GM10248 (cell line): ENCODE measurements at regions of chr2 and their contacts with region 1.

Region 1: GRCh38 chr2:136255648-136256463 is 137.9 kb upstream of the CXCR4 start:
- DNase-seq: no peak
- CTCF ChIP-seq: no peak

Region 2: DNA sequence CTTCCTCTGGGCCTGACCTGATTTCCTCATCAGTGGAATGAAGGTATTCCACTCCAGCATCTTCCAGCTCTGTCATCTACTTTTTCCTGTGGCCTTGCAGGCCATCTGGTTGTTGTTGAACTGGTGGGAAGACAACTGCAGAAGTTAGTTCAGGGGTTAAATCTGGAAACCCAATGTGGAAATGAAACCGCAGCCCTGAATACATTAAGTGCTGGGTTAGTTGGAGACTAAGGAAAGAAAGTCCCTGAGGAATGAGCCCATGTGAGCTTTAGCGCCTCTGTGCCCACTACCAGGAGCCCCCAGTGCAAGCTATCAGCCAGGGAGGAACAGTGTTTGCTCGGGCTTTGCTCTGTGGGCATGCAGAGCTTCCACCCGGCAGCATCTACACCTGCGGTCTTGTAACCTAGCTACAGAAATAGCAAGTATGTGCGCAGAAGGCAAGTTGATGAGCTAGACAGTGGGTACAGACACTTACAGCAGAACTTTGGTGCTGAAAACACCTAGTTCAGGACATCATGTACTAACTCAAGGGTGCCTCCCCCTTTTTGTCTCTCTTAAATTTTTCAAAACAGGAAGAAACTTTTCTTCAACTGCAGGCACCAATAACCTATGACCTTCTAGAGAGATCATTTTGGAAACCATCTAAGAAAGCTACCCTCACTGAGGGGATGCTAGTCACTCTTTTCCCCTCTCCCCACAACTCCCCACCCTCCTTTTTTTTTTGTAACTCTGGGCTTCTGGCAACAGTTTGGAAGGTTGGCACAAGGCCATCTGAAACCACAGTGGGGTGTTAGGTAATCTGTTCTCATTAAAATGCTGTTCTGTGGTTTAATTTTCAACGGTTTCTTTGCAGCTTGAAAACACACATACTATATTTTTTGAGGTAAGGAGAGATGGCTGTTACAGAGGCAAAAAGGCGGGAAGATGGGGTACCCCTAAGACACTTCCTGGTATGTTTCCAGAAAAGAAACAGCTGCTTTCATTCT is 119.6 kb before region 1 on chr2:
- CTCF ChIA-PET with region 1: interaction called, 11 read pairs
- POLR2A ChIA-PET with region 1: interaction called, 3 read pairs
- DNase-seq: peak; percentile 51
- CTCF ChIP-seq: no peak

Region 3: DNA sequence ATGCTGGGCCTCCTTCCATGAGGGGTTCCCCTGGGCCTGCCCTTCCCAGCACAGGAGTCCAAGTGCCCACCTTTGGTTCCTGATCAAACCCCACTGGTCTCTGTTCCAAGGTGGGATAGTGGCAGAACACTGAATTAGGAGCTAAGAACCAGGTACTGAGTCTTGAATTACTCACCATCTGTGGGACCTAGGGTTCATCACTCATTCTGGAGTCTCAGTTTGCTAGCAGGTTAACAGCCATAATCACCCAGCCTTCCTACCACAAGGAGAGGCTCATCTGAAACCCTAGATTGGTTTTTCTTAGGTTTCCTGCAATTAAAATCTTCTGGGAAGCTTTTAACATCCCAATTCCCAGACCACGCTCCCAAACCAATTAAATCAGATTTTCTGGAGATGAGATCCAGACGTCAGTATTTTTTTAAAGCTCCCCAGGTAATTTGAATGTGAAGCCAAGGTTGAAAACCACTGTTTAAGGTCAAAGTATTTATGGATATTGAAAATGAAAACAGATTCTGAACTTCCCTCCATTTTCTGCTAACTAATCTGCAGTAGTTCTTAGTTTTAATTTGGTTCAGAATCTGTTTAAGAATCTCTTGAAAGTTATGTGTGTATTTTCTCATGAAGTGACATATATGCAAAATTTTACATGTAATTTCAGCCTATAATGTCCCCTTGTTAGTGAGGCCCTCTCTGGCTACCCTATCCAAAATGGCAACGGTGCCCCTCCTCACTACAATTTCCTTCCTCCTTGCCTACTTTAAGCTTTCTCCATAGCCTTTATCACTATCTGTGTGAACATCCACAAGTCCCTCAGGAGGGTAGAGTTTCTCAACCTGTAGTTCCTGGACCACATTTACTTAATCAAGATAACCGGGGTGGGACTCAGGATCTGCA is 28.6 kb after region 1 on chr2:
- CTCF ChIA-PET with region 1: interaction called, 23 read pairs
- POLR2A ChIA-PET with region 1: no interaction called
- DNase-seq: no peak
- CTCF ChIP-seq: no peak

Region 4: GRCh38 chr2:136384531-136385303 is 128.9 kb after region 1 on chr2:
- CTCF ChIA-PET with region 1: interaction called, 10 read pairs
- POLR2A ChIA-PET with region 1: no interaction called
- DNase-seq: peak; percentile 41
- CTCF ChIP-seq: peak; percentile 77